ENCODE measurements at regions of chr2 and their contacts with region 1.

Region 1: DNA sequence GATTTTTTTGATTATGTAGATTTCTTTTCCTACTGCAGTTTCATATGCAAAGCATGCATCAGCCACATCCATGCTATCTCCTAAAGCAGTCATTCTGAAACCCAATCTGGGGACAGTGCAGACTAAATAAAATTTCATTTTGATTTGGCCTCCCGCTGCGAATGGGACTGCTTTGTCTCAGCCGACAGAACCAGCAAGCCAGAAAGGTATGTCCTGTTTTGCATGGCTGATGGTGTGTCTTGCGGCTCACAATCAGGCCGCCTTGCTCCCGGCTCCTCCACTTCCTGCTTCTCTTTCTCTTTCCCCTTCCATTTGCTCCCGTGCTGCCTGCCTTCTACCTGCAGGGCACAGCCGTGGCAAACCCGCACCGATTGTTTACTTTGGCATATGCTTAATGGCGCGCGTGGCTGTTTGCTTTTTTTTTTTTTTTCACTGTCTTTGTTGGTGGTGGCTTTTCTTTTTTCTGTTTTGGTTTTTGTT is 419.6 kb upstream of the POU3F3 start:
- DNase-seq: no peak
- ATAC-seq: no peak
- H3K4me3 ChIP-seq: peak overlapping the region; percentile 19 to 31
- H3K27ac ChIP-seq: no peak overlapping the region
- H3K4me1 ChIP-seq: no peaks in the 10 kb centered on the region
- H3K27me3 ChIP-seq: peaks cover 3% of the 10 kb centered on the region; the same call in 1 of the 2 replicates
- CTCF ChIP-seq: no peak

Region 2: GRCh38 chr2:103361712-103362111 is 1072.6 kb before region 1 on chr2:
- CTCF ChIA-PET with region 1: no interaction called
- POLR2A ChIA-PET with region 1: no interaction called
- in situ Hi-C with region 1: no loop called
- intact Hi-C with region 1: no loop called
- DNase-seq: no peak
- ATAC-seq: no peak
- H3K4me3 ChIP-seq: no peak overlapping the region
- H3K27ac ChIP-seq: no peak overlapping the region
- H3K4me1 ChIP-seq: no peaks in the 10 kb centered on the region
- H3K27me3 ChIP-seq: no peaks in the 10 kb centered on the region
- CTCF ChIP-seq: no peak

Region 3: DNA sequence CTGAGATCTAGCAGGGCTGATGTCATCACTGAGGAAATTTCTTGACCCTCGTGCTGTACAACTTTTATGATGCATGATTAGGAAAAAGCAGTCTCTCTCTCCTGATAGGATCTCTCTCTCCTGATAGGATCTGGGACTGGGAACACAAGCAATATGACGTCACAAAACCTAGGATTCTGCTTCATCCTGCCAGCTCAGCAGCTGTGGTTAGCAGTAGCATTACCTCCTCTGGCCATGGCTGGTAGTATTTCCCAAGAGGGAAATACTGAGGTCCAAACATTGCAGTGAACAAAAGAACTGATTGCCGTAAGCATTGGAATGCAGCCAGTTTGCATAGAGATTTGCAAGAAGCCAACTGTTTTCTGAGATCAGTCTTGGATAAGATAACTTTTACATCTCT is 101.6 kb before region 1 on chr2:
- CTCF ChIA-PET with region 1: no interaction called
- POLR2A ChIA-PET with region 1: interaction called, 12 read pairs
- in situ Hi-C with region 1: no loop called
- intact Hi-C with region 1: no loop called
- DNase-seq: no peak
- ATAC-seq: no peak
- H3K4me3 ChIP-seq: no peak overlapping the region
- H3K27ac ChIP-seq: no peak overlapping the region
- H3K4me1 ChIP-seq: no peaks in the 10 kb centered on the region
- H3K27me3 ChIP-seq: no peaks in the 10 kb centered on the region
- CTCF ChIP-seq: no peak

Measured in Panc1 (cell line).